ENCODE measurements at regions of chr1 and their contacts with region 1.

Region 1: DNA sequence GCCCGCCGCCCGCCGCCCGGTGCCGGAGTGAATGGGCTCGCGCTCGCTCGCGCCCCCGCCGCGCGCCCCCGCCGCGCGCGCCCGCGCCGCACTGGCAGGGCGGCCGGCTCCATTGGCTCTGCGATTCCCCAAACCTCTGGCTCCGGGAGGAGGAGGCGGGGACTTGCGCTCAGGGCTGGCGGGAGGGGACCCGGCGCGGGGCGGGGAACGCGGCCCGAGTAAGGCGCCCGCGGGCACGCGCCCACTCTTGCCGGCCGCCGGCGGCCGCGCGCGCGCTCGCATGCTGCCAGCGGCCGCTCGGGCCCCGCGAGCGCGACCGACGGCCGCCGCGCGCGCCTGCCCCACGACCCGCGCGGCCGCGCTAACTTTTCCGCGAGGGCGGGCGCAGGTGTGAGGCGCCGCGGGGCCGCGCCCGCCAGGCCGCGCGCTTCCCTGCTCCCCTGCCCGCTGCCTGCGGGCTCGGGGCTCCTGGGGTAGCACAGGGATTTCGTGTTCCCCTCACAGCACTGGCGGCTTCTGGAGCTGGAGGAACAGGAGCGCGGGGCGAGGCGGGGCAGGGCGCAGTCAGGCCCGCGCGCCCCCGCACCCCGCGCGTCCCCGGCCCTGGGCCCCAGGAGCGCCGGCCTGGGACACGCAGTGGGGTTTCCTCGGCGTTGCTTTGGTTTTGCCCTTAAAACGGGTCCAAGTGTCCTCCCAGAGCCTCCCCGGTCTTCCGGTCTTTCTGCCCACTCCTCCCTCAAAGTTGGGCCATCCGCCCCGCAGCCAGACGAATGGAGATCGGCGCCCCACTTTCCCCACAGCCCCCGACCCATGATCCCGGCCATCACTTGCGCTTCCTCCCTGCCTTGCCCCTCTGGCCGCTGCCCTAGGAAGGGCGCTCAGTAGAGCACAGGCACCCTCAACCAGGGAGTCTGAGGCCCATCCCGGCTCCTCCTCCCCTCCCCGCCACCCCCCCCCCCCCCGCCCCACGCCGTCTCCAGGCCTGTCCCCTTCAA is 101.5 kb downstream of the CASZ1 start:
- DNase-seq: peak; percentile 58 to 89
- H3K4me3 ChIP-seq: peak overlapping the region; percentile 46; the same call in 1 of the 2 replicates
- H3K27ac ChIP-seq: no peak overlapping the region
- H3K4me1 ChIP-seq: peaks cover 32% of the 10 kb centered on the region
- H3K27me3 ChIP-seq: no peaks in the 10 kb centered on the region
- CTCF ChIP-seq: no peak

Region 2: GRCh38 chr1:9486466-9487140 is 1208.3 kb before region 1 on chr1:
- CTCF ChIA-PET with region 1: no interaction called
- POLR2A ChIA-PET with region 1: no interaction called
- intact Hi-C with region 1: no loop called
- DNase-seq: no peak
- H3K4me3 ChIP-seq: no peak overlapping the region
- H3K27ac ChIP-seq: no peak overlapping the region
- H3K4me1 ChIP-seq: no peaks in the 10 kb centered on the region
- H3K27me3 ChIP-seq: no peaks in the 10 kb centered on the region
- CTCF ChIP-seq: no peak

Region 3: GRCh38 chr1:10522322-10522860 is 172.5 kb before region 1 on chr1:
- CTCF ChIA-PET with region 1: no interaction called
- POLR2A ChIA-PET with region 1: no interaction called
- intact Hi-C with region 1: no loop called
- DNase-seq: no peak
- H3K4me3 ChIP-seq: no peak overlapping the region
- H3K27ac ChIP-seq: no peak overlapping the region
- H3K4me1 ChIP-seq: peaks cover 5% of the 10 kb centered on the region
- H3K27me3 ChIP-seq: no peaks in the 10 kb centered on the region
- CTCF ChIP-seq: no peak

Region 4: GRCh38 chr1:10909697-10910671 is 215.1 kb after region 1 on chr1:
- CTCF ChIA-PET with region 1: no interaction called
- POLR2A ChIA-PET with region 1: no interaction called
- intact Hi-C with region 1: loop called (anchors 1 kb)
- DNase-seq: peak in 1 of 2 experiments; percentile 72
- H3K4me3 ChIP-seq: no peak overlapping the region
- H3K27ac ChIP-seq: no peak overlapping the region
- H3K4me1 ChIP-seq: no peaks in the 10 kb centered on the region
- H3K27me3 ChIP-seq: no peaks in the 10 kb centered on the region
- CTCF ChIP-seq: peak; percentile 76

Measured in PC-9 (cell line).